ENCODE measurements at regions of chr15 and their contacts with region 1.

Region 1: DNA sequence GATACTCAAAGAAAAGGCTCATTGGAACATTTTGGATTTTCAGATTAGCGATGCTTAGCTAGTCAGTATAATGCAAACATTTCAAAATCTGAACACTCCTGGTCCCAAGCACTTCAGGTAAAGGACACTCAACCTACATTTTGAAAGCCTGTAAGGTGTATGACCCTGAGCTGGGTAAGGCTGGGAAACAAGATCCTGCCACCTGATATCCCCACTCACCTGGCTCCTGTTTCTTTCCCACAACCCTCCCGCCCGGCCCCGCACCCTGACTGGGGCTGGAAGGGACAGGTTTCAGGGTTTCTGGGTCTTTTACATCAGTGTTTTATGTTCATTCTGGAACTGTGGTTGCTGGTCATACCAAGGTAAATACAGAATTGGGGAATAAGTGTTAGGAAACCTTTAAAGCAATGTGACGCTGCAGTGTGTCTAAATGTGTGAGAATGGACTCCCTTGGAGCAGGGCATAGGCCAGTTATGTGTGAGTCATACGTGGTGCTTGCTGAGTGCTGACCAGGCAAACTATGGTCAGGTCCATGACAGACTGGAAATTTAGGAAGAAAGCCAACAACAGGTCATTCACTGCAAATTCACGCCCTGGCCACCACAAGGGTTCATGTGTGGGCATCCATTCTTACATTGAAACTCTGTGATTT is 22.9 kb downstream of the CTXND1 start:
- DNase-seq: no peak
- H3K4me3 ChIP-seq: no peak overlapping the region
- H3K27ac ChIP-seq: no peak overlapping the region
- H3K4me1 ChIP-seq: no peaks in the 10 kb centered on the region
- H3K27me3 ChIP-seq: peaks cover 0 to 8% of the 10 kb centered on the region in 2 donors
- CTCF ChIP-seq: no peak
- POLR2A ChIP-seq: no peak

Region 2: GRCh38 chr15:79837846-79838245 is 391.2 kb before region 1 on chr15:
- intact Hi-C with region 1: loop called (anchors 5 kb)
- DNase-seq: no peak
- H3K4me3 ChIP-seq: no peak overlapping the region
- H3K27ac ChIP-seq: no peak overlapping the region
- H3K4me1 ChIP-seq: no peaks in the 10 kb centered on the region
- H3K27me3 ChIP-seq: no peaks in the 10 kb centered on the region
- CTCF ChIP-seq: no peak
- POLR2A ChIP-seq: no peak